Common myeloid progenitor, CD34-positive (primary cell): ENCODE measurements at regions of chr14 and their contacts with region 1.

Region 1: GRCh38 chr14:74362361-74362915 is 14.2 kb downstream of the VRTN start:
- DNase-seq: peak; percentile 59 to 82 (median 73)
- H3K4me3 ChIP-seq: no peak overlapping the region
- H3K27ac ChIP-seq: no peak overlapping the region
- H3K4me1 ChIP-seq: peaks cover 0 to 2% (median 0%) of the 10 kb centered on the region in 4 experiments
- H3K27me3 ChIP-seq: peaks cover 0 to 9% (median 2%) of the 10 kb centered on the region in 5 experiments

Region 2: GRCh38 chr14:74314576-74314975 is 47.9 kb before region 1 on chr14:
- CTCF ChIA-PET with region 1: no interaction called
- POLR2A ChIA-PET with region 1: no interaction called
- DNase-seq: no peak
- H3K4me3 ChIP-seq: no peak overlapping the region
- H3K27ac ChIP-seq: no peak overlapping the region
- H3K4me1 ChIP-seq: no peaks in the 10 kb centered on the region
- H3K27me3 ChIP-seq: no peaks in the 10 kb centered on the region

Region 3: GRCh38 chr14:74478996-74479635 is 116.7 kb after region 1 on chr14:
- CTCF ChIA-PET with region 1: interaction called, 23 read pairs
- POLR2A ChIA-PET with region 1: no interaction called
- DNase-seq: peak in 2 of 3 donors; percentile 18 to 31
- H3K4me3 ChIP-seq: no peak overlapping the region
- H3K27ac ChIP-seq: no peak overlapping the region
- H3K4me1 ChIP-seq: no peaks in the 10 kb centered on the region
- H3K27me3 ChIP-seq: no peaks in the 10 kb centered on the region

Region 4: DNA sequence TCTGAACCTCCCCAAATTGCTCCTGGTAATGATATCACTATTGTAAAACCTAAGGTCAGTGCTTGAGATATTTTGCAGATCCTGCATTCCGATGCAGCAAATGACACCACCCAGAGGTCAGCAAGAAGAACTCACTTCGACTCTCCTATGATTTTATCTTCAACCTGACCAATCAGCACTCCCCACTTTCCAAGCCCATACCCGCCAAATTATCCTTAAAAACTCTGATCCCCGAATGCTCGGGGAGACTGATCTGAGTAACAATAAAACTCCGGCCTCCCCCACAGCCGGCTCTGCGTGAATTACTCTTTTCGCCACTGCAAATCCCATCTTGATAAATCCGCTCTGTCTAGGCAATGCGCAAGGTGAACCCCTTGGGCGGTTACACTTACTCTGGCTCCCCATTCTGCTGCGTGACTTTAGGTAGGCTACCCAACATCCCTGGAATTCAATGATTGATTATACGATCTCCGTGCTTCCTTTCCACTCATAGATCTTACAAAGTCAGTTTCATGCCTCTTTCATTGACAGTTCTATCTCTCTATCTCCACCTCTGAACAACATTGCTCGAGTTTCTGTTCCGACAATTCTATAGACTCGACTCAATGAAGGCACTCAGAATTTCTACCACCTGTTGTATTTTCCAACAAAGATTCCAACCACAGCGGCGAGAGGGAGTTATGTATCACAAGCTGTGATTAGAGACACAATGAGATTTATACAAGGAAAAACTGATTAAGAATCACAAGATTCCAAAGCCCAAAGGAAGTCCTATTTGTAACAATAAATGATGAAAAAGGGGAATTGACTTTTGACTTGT is 129.7 kb after region 1 on chr14:
- CTCF ChIA-PET with region 1: interaction called, 14 read pairs
- POLR2A ChIA-PET with region 1: no interaction called
- DNase-seq: peak; percentile 47 to 63 (median 57)
- H3K4me3 ChIP-seq: peak overlapping the region; percentile 62 to 99 (median 93)
- H3K27ac ChIP-seq: peak overlapping the region; percentile 48 to 83
- H3K4me1 ChIP-seq: peaks cover 18 to 43% (median 38%) of the 10 kb centered on the region in 4 experiments
- H3K27me3 ChIP-seq: no peaks in the 10 kb centered on the region

Region 5: GRCh38 chr14:74552623-74553022 is 190.2 kb after region 1 on chr14:
- CTCF ChIA-PET with region 1: no interaction called
- POLR2A ChIA-PET with region 1: no interaction called
- DNase-seq: no peak
- H3K4me3 ChIP-seq: no peak overlapping the region
- H3K27ac ChIP-seq: no peak overlapping the region
- H3K4me1 ChIP-seq: peaks cover 0 to 23% (median 17%) of the 10 kb centered on the region in 4 experiments
- H3K27me3 ChIP-seq: no peaks in the 10 kb centered on the region